Dendritic cell treated with granulocyte-macrophage colony-stimulating factor and Interleukin-4, amounts not matched to agents 40 ng/mL and 50 ng/mL, for 4 days (primary cell): ENCODE measurements at regions of chr1 and their contacts with region 1.

Region 1: GRCh38 chr1:62643283-62643682 is 44.9 kb downstream of the DOCK7 start:
- H3K4me3 Mint-ChIP-seq: no peak overlapping the region
- H3K27ac Mint-ChIP-seq: no peak overlapping the region
- H3K4me1 Mint-ChIP-seq: peaks cover under 1% of the 10 kb centered on the region
- H3K27me3 Mint-ChIP-seq: no peaks in the 10 kb centered on the region

Region 2: GRCh38 chr1:62299426-62300200 is 343.7 kb before region 1 on chr1:
- intact Hi-C with region 1: no loop called
- H3K4me3 Mint-ChIP-seq: no peak overlapping the region
- H3K27ac Mint-ChIP-seq: no peak overlapping the region
- H3K4me1 Mint-ChIP-seq: peaks cover 11% of the 10 kb centered on the region
- H3K27me3 Mint-ChIP-seq: peaks cover 2% of the 10 kb centered on the region

Region 3: GRCh38 chr1:62514746-62515423 is 128.4 kb before region 1 on chr1:
- intact Hi-C with region 1: loop called (anchors 10 kb)
- H3K4me3 Mint-ChIP-seq: no peak overlapping the region
- H3K27ac Mint-ChIP-seq: peak overlapping the region; percentile 37
- H3K4me1 Mint-ChIP-seq: no peaks in the 10 kb centered on the region
- H3K27me3 Mint-ChIP-seq: no peaks in the 10 kb centered on the region

Region 4: GRCh38 chr1:62746085-62746808 is 103.0 kb after region 1 on chr1:
- intact Hi-C with region 1: loop called (anchors 10 kb)
- H3K4me3 Mint-ChIP-seq: no peak overlapping the region
- H3K27ac Mint-ChIP-seq: no peak overlapping the region
- H3K4me1 Mint-ChIP-seq: peaks cover under 1% of the 10 kb centered on the region
- H3K27me3 Mint-ChIP-seq: peaks cover 6% of the 10 kb centered on the region

Region 5: DNA sequence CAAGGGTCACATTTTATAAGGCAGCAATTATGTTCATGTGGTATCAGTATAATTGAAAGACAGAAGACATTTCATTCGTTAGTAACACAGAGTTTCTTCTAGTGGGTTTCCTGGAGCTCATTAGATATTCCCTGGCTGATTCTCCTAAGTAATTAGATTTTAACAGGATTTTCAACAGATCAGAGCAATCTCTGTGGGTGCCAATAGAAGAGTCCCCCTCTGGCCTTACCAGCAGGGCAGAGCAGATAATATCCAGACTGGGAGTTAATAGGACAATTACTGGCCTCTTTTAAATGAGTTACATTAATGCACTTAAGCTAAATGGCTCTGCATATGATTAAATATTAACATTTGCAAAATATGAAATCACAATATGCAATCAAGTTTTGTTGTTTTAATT is 604.9 kb after region 1 on chr1:
- intact Hi-C with region 1: no loop called
- H3K4me3 Mint-ChIP-seq: no peak overlapping the region
- H3K27ac Mint-ChIP-seq: no peak overlapping the region
- H3K4me1 Mint-ChIP-seq: no peaks in the 10 kb centered on the region
- H3K27me3 Mint-ChIP-seq: no peaks in the 10 kb centered on the region